Ovary (tissue), 10 donors: ENCODE measurements at regions of chr12 and their contacts with region 1.

Region 1: DNA sequence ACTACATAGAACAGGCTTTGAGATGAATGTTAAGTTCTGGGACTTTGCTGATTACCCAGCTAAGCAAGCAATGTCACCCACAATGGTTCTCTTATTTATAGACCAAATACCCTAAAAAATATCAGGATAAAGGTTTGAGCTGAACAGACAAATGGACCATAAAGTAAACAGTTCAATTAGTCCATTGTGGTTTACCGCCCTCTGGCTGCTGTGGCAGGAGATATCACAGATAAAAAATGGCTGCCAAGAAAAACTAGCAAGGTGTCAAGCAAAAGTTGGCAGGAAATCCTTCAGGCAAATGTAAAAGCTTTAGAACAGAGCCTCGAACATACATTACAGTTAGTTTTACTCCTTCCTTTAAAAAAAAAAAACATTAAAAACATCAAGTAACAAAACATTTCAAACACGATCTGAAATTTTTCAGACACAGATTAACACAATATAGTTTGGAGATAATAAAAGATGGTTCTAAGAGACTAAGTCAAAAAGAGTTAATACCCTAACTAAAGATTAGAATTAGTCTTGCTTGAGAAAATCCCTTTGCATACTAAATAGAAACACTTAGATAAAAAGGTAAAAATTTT is 41.3 kb downstream of the MED13L start:
- DNase-seq: peak in 2 of 5 donors; percentile 31 to 51
- H3K4me3 ChIP-seq: no peak overlapping the region
- H3K27ac ChIP-seq: no peak overlapping the region
- H3K4me1 ChIP-seq: peaks cover 3% of the 10 kb centered on the region
- H3K27me3 ChIP-seq: no peaks in the 10 kb centered on the region
- CTCF ChIP-seq: peak in 2 of 3 donors; percentile 56 to 70
- EP300 ChIP-seq: no peak
- POLR2A ChIP-seq: no peak

Region 2: DNA sequence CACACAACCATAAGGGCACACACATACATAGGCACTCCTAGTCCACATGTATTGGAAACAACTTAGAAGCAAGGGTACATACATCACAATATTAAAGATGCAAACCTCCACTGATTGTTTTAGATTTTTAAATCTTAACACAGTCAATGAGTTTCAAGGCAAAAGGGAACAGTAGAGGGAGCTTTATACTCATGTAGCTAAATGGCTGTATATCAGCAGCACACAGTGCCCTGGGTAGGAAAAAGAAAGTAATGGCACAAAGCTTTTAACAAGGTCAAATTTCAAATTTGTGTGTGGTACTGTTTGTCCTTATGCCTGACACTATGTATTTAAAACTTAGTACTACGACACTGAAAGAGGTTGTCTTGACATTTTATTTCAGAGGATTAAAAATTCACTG is 220.7 kb before region 1 on chr12:
- intact Hi-C with region 1: loop called in 1 of 4 experiments (anchors 10 kb)
- DNase-seq: no peak
- H3K4me3 ChIP-seq: no peak overlapping the region
- H3K27ac ChIP-seq: no peak overlapping the region
- H3K4me1 ChIP-seq: peaks cover 2% of the 10 kb centered on the region
- H3K27me3 ChIP-seq: no peaks in the 10 kb centered on the region
- CTCF ChIP-seq: peak; percentile 12 to 54 (median 34)
- EP300 ChIP-seq: no peak
- POLR2A ChIP-seq: no peak